ENCODE measurements at regions of chr4 and their contacts with region 1.

Region 1: DNA sequence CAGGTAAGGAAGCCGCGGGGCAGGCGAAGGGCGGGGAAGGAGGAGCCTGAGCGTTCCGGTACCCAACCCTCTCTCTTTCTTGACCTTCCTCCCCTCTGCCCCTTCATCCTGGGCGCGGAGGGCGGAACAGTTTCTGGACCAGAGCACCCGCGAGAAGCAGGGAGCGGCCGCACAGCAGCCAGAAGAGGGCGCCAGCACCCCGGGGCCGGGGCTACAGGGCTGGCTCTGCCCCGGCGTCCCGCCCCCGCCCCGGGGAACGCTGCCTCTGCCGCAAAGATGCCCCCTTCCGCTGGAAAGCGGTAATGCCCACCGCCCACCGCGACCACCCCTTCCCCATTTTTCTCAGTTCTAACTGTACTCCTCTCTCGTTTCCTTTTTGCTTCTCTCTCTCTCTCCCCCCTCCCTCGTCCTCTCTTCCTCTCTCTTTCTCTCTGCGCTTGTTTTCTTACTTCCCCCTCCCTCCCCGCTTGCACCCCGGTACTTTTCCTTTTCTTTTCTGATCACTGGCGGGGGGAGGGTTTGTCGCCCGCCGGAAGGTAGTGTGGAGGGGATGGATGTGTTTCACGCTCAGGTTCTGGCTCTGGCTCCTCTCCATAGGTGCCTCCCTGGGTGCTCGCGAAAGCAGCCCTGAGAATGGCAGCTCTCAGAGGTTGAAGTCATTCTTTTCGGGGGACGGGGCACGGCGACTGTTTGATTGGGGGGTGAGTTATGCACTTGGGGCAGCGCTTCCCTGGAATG is 13.1 kb upstream of the PRDM8 start:
- DNase-seq: no peak
- H3K4me3 ChIP-seq: peak overlapping the region; percentile 60 to 84
- H3K27ac ChIP-seq: peak overlapping the region; percentile 89
- H3K4me1 ChIP-seq: peaks cover 41% of the 10 kb centered on the region
- H3K27me3 ChIP-seq: no peaks in the 10 kb centered on the region
- CTCF ChIP-seq: peak; percentile 61 to 82 (median 78)
- POLR2A ChIP-seq: peak in 1 of 2 donors; percentile 1

Region 2: GRCh38 chr4:80072744-80073472 is 111.3 kb before region 1 on chr4 and contains the start of gene ANTXR2:
- intact Hi-C with region 1: loop called (anchors 5 kb)
- DNase-seq: peak in 1 of 2 donors; percentile 96
- H3K4me3 ChIP-seq: peak within 1 kb of the TSS; percentile 89 to 99
- H3K27ac ChIP-seq: peak within 1 kb of the TSS; percentile 94
- H3K4me1 ChIP-seq: peaks cover 40% of the 10 kb centered on the region
- H3K27me3 ChIP-seq: no peaks in the 10 kb centered on the region
- CTCF ChIP-seq: no peak
- POLR2A ChIP-seq: peak in 1 of 2 donors; percentile 34
- total RNA-seq, gene ANTXR2: 64.6 TPM

Measured in vagina (tissue), 2 donors.